Transverse colon (tissue), 4 donors: ENCODE measurements at regions of chr4 and their contacts with region 1.

Region 1: GRCh38 chr4:17241835-17242234 is 270.1 kb downstream of the QDPR start:
- DNase-seq: no peak
- H3K4me3 ChIP-seq: no peak overlapping the region
- H3K27ac ChIP-seq: no peak overlapping the region
- H3K4me1 ChIP-seq: no peaks in the 10 kb centered on the region
- H3K27me3 ChIP-seq: no peaks in the 10 kb centered on the region
- CTCF ChIP-seq: no peak
- EP300 ChIP-seq: no peak
- POLR2A ChIP-seq: no peak

Region 2: DNA sequence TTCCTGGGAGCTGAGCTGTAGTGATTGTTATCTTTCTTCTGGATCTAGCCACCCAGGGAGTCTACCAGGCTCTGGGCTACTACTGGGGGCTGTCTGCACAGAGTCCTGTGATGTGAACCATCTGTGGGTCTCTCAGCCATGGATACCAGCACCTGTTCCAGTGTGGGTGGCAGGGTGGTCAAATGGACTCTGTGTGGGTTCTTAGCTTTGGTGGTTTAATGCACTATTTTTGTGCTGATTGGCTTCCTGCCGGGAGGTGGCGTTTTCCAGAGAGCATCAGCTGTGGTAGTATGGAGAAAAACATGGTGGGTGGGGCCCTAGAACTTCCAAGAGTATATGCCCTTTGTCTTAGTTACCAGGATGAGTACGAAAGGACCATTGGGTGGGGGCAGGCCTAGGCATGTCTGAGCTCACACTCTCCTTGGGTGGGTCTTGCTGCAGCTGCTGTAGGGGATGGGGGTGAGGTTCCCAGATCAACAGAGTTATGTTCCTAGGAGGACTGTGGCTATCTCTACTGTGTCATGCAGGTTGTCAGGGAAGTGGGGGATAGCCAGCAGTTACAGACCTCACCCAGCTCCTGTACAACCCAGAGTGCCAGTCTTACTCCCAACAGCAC is 78.6 kb before region 1 on chr4:
- in situ Hi-C with region 1: no loop called
- intact Hi-C with region 1: loop called (anchors 1 kb)
- DNase-seq: no peak
- H3K4me3 ChIP-seq: no peak overlapping the region
- H3K27ac ChIP-seq: no peak overlapping the region
- H3K4me1 ChIP-seq: no peaks in the 10 kb centered on the region
- H3K27me3 ChIP-seq: no peaks in the 10 kb centered on the region
- CTCF ChIP-seq: no peak
- EP300 ChIP-seq: no peak
- POLR2A ChIP-seq: no peak